ENCODE measurements at regions of chr7 and their contacts with region 1.

Region 1: DNA sequence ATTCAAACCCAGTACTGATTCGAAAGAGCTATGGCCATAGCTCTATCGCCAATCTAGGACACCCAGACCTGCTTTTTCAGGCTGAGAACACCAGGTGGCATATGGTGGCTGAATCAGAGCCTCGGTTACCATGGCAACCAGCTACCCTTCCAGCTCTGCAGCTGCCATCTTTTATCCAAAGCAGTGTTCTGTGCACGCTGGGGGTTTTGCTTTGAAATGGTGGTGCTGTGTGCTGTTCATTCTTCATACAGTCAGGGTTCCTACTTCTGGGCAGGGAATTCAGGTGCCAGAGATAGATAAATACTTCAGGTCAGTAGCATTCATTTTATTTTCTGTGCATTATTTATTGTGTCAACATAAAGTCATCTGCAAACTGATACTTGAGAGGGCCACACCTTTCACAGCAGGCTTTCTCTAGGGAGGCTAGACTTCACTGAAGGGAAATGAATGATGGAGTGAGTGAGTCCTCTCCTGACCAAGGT is 85.4 kb downstream of the AKR1D1 start:
- DNase-seq: peak; percentile 95
- H3K4me3 Mint-ChIP-seq: no peak overlapping the region
- H3K27ac Mint-ChIP-seq: no peak overlapping the region
- H3K4me1 Mint-ChIP-seq: no peaks in the 10 kb centered on the region
- H3K27me3 Mint-ChIP-seq: no peaks in the 10 kb centered on the region
- CTCF ChIP-seq: peak; percentile 73

Region 2: GRCh38 chr7:138459413-138460175 is 298.0 kb after region 1 on chr7:
- CTCF ChIA-PET with region 1: interaction called, 3 read pairs
- POLR2A ChIA-PET with region 1: no interaction called
- intact Hi-C with region 1: loop called (anchors 1 kb)
- DNase-seq: peak; percentile 97
- H3K4me3 Mint-ChIP-seq: peak overlapping the region; percentile 74
- H3K27ac Mint-ChIP-seq: peak overlapping the region; percentile 3
- H3K4me1 Mint-ChIP-seq: peaks cover 12% of the 10 kb centered on the region
- H3K27me3 Mint-ChIP-seq: no peaks in the 10 kb centered on the region
- CTCF ChIP-seq: peak; percentile 21

Region 3: GRCh38 chr7:138521837-138522461 is 360.3 kb after region 1 on chr7:
- CTCF ChIA-PET with region 1: no interaction called
- POLR2A ChIA-PET with region 1: no interaction called
- intact Hi-C with region 1: no loop called
- DNase-seq: no peak
- H3K4me3 Mint-ChIP-seq: no peak overlapping the region
- H3K27ac Mint-ChIP-seq: no peak overlapping the region
- H3K4me1 Mint-ChIP-seq: no peaks in the 10 kb centered on the region
- H3K27me3 Mint-ChIP-seq: no peaks in the 10 kb centered on the region
- CTCF ChIP-seq: no peak

Region 4: DNA sequence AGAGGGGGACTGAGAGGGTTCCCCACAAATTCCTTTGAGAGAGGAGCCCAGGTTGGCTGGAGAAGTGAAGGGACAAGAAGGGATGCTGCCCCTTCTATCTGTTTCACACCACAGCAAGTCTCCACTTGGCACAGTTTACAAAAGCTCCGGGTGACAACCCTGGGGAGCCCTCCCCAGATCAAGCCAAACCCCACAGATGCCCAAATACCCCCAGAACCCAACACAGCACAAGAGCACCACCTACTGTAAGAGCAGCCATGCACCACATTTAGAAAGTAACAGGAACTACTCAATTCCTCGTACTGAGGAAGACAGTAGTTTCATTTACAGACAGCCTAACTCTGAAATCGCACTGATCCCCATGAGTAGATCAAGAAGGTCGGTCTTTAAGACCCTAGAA is 704.2 kb after region 1 on chr7:
- CTCF ChIA-PET with region 1: no interaction called
- POLR2A ChIA-PET with region 1: no interaction called
- intact Hi-C with region 1: loop called (anchors 1 kb)
- DNase-seq: no peak
- H3K4me3 Mint-ChIP-seq: no peak overlapping the region
- H3K27ac Mint-ChIP-seq: no peak overlapping the region
- H3K4me1 Mint-ChIP-seq: peaks cover 20% of the 10 kb centered on the region
- H3K27me3 Mint-ChIP-seq: no peaks in the 10 kb centered on the region
- CTCF ChIP-seq: peak; percentile 38

Region 5: DNA sequence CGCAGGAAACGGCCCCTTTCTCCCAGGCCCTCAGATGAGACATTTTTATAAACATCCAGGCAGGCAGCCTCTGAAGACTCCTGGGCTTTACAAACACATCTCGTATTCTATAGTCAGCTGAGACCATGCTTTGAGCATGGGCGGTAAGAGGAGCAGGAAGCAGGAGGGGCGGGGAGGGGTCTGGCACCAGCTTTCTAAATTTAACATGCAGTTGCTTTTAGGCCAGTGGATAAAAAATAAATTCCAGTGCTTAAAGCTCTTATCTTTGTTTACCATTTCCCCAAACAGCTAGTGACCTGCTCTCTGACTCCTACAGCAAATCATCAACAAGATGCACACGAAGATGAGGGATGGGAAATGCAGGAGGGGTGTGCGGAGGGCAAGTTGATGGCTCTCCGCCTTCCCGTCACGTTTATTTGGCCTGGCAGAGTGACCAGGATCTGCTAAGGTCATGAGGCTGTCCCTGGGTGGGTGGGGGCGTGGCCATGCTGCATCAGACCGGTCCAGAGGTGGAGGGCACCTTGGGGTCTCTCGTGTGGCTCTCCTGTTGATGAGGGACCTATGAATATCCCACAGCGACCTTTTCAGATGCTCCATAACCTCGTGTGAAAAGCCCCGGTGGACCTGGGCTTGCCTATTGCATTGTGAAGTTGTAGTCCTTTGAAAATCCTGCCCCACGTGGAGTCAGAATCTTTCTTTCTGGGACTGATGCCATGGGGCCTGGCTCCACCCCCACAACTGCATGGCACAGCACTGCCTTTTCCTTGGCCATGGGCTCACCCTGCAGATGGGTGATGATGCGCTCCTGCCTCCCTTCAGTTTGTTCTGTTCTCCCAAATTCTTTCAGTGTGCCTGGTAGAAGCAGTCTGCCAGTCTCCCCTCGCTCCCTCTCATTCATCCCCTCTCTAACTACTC is 1833.6 kb after region 1 on chr7:
- CTCF ChIA-PET with region 1: no interaction called
- POLR2A ChIA-PET with region 1: no interaction called
- intact Hi-C with region 1: no loop called
- DNase-seq: peak; percentile 73
- H3K4me3 Mint-ChIP-seq: no peak overlapping the region
- H3K27ac Mint-ChIP-seq: no peak overlapping the region
- H3K4me1 Mint-ChIP-seq: peaks cover 12% of the 10 kb centered on the region
- H3K27me3 Mint-ChIP-seq: no peaks in the 10 kb centered on the region
- CTCF ChIP-seq: no peak

Measured in MCF 10A (cell line).